ENCODE measurements at regions of chr20 and their contacts with region 1.

Region 1: GRCh38 chr20:7257692-7258466 is 490.4 kb downstream of the BMP2 start:
- DNase-seq: no peak
- ATAC-seq: no peak
- H3K4me3 ChIP-seq: no peak overlapping the region
- H3K27ac ChIP-seq: no peak overlapping the region
- H3K4me1 ChIP-seq: no peaks in the 10 kb centered on the region
- H3K27me3 ChIP-seq: no peaks in the 10 kb centered on the region
- CTCF ChIP-seq: no peak
- EP300 ChIP-seq: no peak
- POLR2A ChIP-seq: no peak
- RAD21 ChIP-seq: no peak

Region 2: GRCh38 chr20:7195704-7196103 is 62.2 kb before region 1 on chr20:
- CTCF ChIA-PET with region 1: no interaction called
- POLR2A ChIA-PET with region 1: no interaction called
- RAD21 ChIA-PET with region 1: no interaction called
- SMC1A ChIA-PET with region 1: no interaction called
- in situ Hi-C with region 1: no loop called
- intact Hi-C with region 1: loop called (anchors 10 kb)
- DNase-seq: no peak
- ATAC-seq: no peak; the same call in 2 of the 3 replicates
- H3K4me3 ChIP-seq: no peak overlapping the region
- H3K27ac ChIP-seq: no peak overlapping the region
- H3K4me1 ChIP-seq: no peaks in the 10 kb centered on the region
- H3K27me3 ChIP-seq: no peaks in the 10 kb centered on the region
- CTCF ChIP-seq: no peak
- EP300 ChIP-seq: no peak
- POLR2A ChIP-seq: no peak
- RAD21 ChIP-seq: no peak

Region 3: DNA sequence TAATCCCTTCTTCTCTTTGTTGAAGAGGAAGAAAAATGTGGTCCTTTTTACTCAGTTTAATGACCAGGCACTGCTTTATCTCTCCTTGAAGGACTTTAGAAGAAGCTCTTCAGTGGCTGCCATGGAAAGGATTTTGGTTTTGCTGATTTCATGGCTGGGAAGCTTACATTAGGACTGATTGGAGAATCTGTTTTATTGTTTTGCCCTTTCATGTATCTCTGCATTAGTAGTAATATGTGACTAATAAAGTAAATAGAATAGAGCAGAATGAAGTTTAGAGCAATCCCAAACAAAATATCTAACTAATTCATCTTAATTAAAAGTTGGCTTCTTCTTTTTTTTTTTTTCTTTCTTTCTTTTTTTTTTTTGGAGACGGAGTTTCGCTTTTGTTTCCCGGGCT is 179.4 kb after region 1 on chr20:
- CTCF ChIA-PET with region 1: no interaction called
- POLR2A ChIA-PET with region 1: no interaction called
- RAD21 ChIA-PET with region 1: no interaction called
- SMC1A ChIA-PET with region 1: no interaction called
- in situ Hi-C with region 1: no loop called
- intact Hi-C with region 1: no loop called
- DNase-seq: no peak
- ATAC-seq: no peak
- H3K4me3 ChIP-seq: no peak overlapping the region
- H3K27ac ChIP-seq: no peak overlapping the region
- H3K4me1 ChIP-seq: no peaks in the 10 kb centered on the region
- H3K27me3 ChIP-seq: no peaks in the 10 kb centered on the region
- CTCF ChIP-seq: no peak
- EP300 ChIP-seq: no peak
- POLR2A ChIP-seq: no peak
- RAD21 ChIP-seq: no peak